ENCODE measurements at regions of chr6 and their contacts with region 1.

Region 1: GRCh38 chr6:104050455-104050854 is 809.3 kb downstream of the HACE1 start:
- DNase-seq: no peak
- H3K4me3 ChIP-seq: no peak overlapping the region
- H3K27ac ChIP-seq: no peak overlapping the region
- H3K4me1 ChIP-seq: no peaks in the 10 kb centered on the region
- H3K27me3 ChIP-seq: no peaks in the 10 kb centered on the region
- CTCF ChIP-seq: no peak
- POLR2A ChIP-seq: no peak

Region 2: DNA sequence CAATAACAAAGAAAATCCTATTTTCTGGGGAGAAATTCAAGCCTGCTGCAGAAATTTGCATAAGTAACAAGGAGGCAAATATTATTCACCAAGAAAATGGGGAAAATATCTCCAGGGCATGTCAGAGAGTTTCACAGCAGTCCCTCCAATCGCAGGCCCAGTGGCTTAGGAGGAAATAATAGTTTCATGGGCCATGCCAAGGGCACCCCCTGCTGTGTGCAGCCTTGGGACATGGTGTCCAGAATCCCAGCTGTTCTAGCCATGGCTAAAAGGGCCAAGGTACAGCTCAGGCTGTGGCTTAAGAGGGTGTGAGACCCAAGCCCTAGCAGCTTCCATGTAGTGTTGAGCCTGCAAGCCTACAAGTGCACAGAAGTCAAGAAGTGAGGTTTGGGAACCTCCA is 1511.9 kb before region 1 on chr6:
- intact Hi-C with region 1: loop called (anchors 10 kb)
- DNase-seq: peak in 1 of 2 donors; percentile 70
- H3K4me3 ChIP-seq: no peak overlapping the region
- H3K27ac ChIP-seq: no peak overlapping the region
- H3K4me1 ChIP-seq: no peaks in the 10 kb centered on the region
- H3K27me3 ChIP-seq: no peaks in the 10 kb centered on the region
- CTCF ChIP-seq: no peak
- POLR2A ChIP-seq: no peak

Measured in vagina (tissue), 2 donors.